Dorsolateral prefrontal cortex (tissue), 120 donors: ENCODE measurements at regions of chr7 and their contacts with region 1.

Region 1: GRCh38 chr7:149838224-149838947 is at the start of gene ZNF862:
- DNase-seq: peak; percentile 98 to 100 (median 99)
- H3K4me3 ChIP-seq: peak within 1 kb of the TSS; percentile 68 to 100 (median 91)
- H3K27ac ChIP-seq: peak within 1 kb of the TSS in 58 of 59 donors; percentile 6 to 95 (median 83)
- H3K27me3 ChIP-seq: no peaks in the 10 kb centered on the region
- CTCF ChIP-seq: peak in 42 of 56 donors; percentile 7 to 61 (median 38)
- total RNA-seq, gene ZNF862: 22.0 to 54.7 (median 37.4) TPM

Region 2: DNA sequence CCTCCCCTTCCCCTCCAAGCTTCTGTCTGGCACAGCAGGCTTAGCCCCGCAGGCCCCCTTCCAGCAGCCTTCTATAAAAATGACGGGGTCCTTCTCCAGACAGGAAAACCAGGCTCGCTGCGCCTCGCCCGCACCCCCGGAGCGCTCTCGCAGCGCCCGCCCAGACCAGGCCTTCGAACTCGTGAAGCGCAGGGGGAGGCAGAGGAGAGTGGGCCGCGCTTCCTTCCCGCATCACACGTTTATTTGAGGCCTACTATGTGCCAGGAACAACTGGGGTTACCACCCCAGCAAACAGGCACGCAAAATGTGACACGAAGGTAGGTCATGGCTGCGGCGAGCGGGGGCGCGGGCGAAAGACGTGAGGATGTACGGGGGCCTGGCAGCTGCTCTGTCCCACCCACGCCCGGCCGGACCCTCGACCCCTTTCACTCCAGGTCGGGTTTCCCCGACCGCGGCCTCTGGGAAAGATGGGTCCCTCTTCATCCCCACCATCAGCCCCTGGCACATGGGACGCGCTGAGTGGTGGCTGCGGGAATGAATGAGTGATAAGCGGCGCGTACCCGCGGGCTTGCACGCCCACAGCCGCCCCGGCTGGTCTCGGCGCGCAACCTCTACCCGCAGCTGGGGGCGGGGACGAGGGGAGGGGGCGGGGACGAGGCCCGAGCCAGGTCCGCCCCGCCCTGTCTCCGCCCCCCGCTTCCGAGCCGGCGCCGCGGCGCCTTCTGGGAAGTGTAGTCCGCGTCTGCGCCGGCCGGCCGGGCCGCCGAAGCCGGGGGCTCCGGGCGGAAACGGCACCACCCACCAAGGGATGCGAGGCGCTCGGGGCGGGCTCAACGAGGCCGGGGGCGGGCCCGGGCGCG is 124.1 kb before region 1 on chr7:
- intact Hi-C with region 1: loop called in 1 of 2 experiments (anchors 5 kb)
- DNase-seq: peak; percentile 68 to 92 (median 84)
- H3K4me3 ChIP-seq: peak overlapping the region; percentile 53 to 96 (median 80)
- H3K27ac ChIP-seq: peak overlapping the region in 54 of 59 donors; percentile 1 to 94 (median 77)
- H3K27me3 ChIP-seq: no peaks in the 10 kb centered on the region
- CTCF ChIP-seq: peak in 22 of 56 donors; percentile 6 to 51 (median 20)

Region 3: DNA sequence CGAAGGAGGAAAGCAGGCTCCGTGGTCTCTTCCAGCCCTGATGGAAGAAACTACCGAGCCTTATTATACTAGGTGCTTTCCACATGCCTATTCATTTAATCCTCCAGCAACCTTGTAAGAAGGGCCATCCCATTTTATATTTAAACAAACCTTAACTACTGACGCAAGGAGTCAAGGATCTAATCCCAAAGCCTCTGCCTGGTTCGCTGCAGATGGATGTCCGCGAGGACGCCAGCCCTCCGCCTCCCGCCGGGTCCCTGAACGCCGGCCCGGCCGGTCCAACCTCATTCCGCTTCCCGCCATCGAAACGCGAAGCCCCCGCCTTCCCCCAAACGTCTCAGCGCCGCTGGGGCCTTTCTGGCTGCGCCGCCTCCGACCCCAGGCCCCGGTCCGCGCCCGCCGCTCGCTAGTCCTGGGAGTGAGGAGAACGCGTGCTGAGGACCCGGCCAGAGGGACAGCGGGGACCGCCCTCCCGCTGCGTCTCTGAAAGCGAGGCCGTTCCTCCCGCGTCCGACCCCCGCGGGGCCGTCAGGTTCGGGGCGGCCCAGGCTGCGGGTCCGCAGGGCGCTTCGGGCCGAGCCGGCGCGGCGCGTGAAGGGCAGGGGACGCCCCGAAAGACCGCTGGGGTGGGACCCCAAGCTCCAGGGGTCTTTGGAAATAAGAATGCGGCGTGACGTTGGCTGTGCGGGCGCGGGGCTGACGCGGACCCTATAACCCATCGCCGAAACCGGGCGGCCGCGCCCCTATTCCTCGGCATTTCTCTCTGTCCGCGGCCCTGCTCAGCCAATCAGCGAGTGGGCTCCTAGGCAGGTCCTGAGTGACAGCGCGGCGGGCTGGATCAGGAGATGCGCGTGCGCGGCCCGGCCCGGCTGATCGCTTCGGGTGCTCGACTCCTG is 34.9 kb after region 1 on chr7 and contains the start of gene ATP6V0E2:
- intact Hi-C with region 1: loop called (anchors 2 to 5 kb)
- DNase-seq: peak; percentile 92 to 98 (median 97)
- H3K4me3 ChIP-seq: peak within 1 kb of the TSS; percentile 68 to 99 (median 91)
- H3K27ac ChIP-seq: peak within 1 kb of the TSS; percentile 71 to 97 (median 93)
- H3K27me3 ChIP-seq: no peaks in the 10 kb centered on the region
- CTCF ChIP-seq: peak in 22 of 56 donors; percentile 7 to 58 (median 32)
- total RNA-seq, gene ATP6V0E2: 174 to 369 (median 255) TPM

Region 4: DNA sequence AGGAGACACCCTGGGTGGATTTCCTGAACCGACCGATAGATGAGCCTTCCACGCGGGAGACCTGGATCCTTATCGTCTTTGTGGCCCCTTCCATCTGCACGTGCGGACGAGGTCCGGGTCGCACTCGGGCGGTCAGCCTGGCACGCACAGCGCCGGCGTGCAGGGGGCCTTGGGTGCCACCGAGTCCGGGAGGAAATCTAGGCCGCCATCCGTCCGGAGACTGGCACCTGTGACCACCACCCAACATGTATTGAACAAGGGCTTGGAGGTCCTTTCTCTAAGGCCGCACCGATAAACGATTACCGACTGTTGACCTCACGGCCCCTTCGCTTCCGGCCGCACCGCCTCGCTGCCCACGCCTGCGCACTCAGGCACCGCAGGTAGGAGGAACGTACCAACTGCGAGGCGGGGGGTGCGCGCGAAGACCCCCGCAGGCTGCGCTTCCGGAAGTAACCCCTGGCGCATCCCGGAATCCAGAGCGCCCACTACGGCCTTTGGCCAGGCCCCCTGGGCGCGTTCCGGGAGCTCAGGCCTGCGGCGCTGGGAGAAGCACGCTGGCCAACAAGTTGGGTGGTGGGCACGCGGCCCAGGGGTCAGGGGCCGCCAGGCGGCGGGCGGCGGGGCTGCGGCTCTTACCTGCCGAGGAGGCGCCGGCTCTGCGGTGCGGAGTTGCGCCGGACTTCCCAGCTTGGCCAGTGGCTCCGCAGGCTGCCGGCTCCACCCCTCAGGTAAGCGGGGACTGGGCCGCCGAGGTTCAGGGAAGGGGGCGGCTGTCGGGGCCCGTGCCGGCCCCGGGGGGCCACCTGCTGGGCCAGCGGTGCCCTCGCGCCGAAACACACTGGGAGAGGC is 484.7 kb after region 1 on chr7 and contains the starts of genes ACTR3C and LRRC61:
- intact Hi-C with region 1: no loop called
- DNase-seq: peak in 2 of 10 donors; percentile 29 to 45
- H3K4me3 ChIP-seq: peak within 1 kb of the TSS; percentile 48 to 88 (median 70)
- H3K27ac ChIP-seq: peak within 1 kb of the TSS in 45 of 59 donors; percentile 1 to 86 (median 60)
- H3K27me3 ChIP-seq: peaks cover 0 to 16% (median 0%) of the 10 kb centered on the region in 45 donors
- CTCF ChIP-seq: peak in 1 of 56 donors; percentile 7
- total RNA-seq, gene ACTR3C: 1.9 to 30.5 (median 9.7) TPM
- total RNA-seq, gene LRRC61: 2.9 to 15.0 (median 7.7) TPM